ENCODE measurements at regions of chrX and their contacts with region 1.

Region 1: GRCh38 chrX:107672955-107673378 is 44.7 kb downstream of the PRPS1 start:
- DNase-seq: peak; percentile 74
- H3K4me3 Mint-ChIP-seq: peak overlapping the region; percentile 54
- H3K27ac Mint-ChIP-seq: peak overlapping the region; percentile 99
- H3K4me1 Mint-ChIP-seq: peaks cover 37% of the 10 kb centered on the region
- H3K27me3 Mint-ChIP-seq: no peaks in the 10 kb centered on the region

Region 2: DNA sequence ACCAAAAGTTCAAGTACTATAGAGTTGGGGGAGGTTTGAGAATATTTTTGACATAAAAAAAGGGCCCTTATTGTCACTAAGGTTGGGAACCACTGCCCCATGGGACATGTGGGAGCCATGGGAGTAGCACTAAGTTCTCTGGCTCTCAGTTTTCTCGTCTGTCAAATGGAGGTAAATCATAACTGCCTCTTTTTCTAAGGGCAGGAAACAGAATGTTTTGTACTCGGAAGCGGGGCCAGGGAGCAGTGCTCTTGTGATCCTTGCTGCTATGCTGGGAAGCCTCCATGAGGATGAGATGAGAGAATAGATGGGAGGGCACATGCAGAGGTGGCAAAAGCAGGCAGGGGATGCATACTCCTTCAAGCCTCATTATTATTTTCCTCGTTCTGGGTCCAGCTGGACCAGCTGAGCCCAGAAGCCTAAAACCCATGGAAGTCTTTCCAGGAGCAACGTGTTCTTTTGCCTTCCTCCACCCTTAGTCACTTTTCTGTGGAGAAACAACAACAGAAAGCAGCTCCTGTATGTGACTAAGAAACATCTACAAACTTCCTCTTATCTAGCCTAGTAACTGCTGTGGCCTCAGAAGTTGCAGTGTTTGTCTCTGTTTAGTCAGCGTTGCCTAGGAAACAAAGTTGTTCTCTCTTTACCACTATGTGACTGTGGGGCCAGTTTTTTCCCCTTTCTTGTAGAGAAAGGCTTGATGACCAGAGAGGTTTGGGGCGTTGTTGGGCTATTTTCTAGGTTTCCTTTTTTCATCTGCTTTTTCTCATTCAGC is 37.8 kb after region 1 on chrX:
- intact Hi-C with region 1: loop called (anchors 1 kb)
- DNase-seq: peak; percentile 56
- H3K4me3 Mint-ChIP-seq: peak overlapping the region; percentile 80
- H3K27ac Mint-ChIP-seq: peak overlapping the region; percentile 99
- H3K4me1 Mint-ChIP-seq: peaks cover 47% of the 10 kb centered on the region
- H3K27me3 Mint-ChIP-seq: no peaks in the 10 kb centered on the region

Region 3: GRCh38 chrX:107716816-107717700 is 44.1 kb after region 1 on chrX:
- intact Hi-C with region 1: loop called (anchors 1 kb)
- DNase-seq: peak; percentile 85
- H3K4me3 Mint-ChIP-seq: peak overlapping the region; percentile 93
- H3K27ac Mint-ChIP-seq: peak overlapping the region; percentile 87
- H3K4me1 Mint-ChIP-seq: peaks cover 39% of the 10 kb centered on the region
- H3K27me3 Mint-ChIP-seq: no peaks in the 10 kb centered on the region

Region 4: DNA sequence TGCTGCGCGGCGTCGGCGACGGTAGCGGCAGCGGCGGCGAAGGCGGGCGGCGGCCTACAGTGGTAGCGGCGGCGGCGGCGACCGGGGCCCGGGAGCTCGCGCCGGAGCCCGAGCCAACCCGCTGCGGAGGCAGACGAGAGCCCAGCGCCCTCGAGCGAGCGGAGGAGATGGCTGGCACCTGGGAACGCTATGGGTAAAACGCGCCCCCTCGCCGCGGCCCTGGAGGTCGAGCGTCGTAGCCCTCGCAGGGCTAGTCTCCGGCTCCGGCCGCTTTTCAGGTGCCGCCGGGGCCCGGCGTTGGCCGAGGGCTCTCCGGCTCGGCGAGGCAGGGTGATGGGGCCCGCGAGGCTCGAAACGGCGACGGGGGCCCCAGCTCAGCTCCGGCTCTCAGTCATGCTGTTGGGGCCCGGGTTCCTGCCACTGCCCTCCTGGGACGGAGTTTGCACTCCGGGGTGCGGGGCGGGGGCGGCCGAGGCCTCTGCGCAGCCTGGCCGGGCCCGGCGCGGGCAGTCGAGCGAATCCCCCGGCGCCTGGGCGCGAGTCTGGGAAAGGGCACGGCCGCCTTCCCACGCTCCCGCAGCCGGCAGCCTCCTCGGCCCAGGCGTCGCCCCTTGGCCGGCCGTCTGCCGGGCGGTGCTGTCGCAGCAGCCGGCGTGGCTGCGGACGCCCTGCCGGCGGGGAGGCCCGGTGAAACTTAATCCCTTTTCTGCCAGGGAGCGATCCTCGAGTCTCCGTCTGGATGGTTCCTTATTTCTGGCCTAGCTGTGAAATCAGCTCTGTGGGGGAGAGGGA is 153.5 kb after region 1 on chrX:
- intact Hi-C with region 1: loop called (anchors 2 kb)
- DNase-seq: no peak
- H3K4me3 Mint-ChIP-seq: peak overlapping the region; percentile 81
- H3K27ac Mint-ChIP-seq: peak overlapping the region; percentile 67
- H3K4me1 Mint-ChIP-seq: peaks cover 25% of the 10 kb centered on the region
- H3K27me3 Mint-ChIP-seq: peaks cover 14% of the 10 kb centered on the region

Region 5: GRCh38 chrX:107849740-107850421 is 176.9 kb after region 1 on chrX:
- intact Hi-C with region 1: loop called (anchors 5 kb)
- DNase-seq: no peak
- H3K4me3 Mint-ChIP-seq: no peak overlapping the region
- H3K27ac Mint-ChIP-seq: no peak overlapping the region
- H3K4me1 Mint-ChIP-seq: peaks cover 5% of the 10 kb centered on the region
- H3K27me3 Mint-ChIP-seq: no peaks in the 10 kb centered on the region

Measured in activated T-helper 2 cell treated with anti-CD3 and anti-CD28 coated beads, Interferon-gamma antibody, Interleukin-2, Interleukin-4, amounts not matched to agents 10 μg/mL and 5 μg/mL and 100 μg/mL, durations not matched to agents 14 hours and 24 hours and 36 hours (primary cell).